ENCODE measurements at regions of chr7 and their contacts with region 1.

Region 1: GRCh38 chr7:22173685-22174573 is 183.0 kb downstream of the RAPGEF5 start:
- DNase-seq: peak; percentile 49
- H3K4me3 Mint-ChIP-seq: peak overlapping the region; percentile 53
- H3K27ac Mint-ChIP-seq: peak overlapping the region; percentile 73
- H3K4me1 Mint-ChIP-seq: peaks cover 19% of the 10 kb centered on the region
- H3K27me3 Mint-ChIP-seq: peaks cover 3% of the 10 kb centered on the region

Region 2: GRCh38 chr7:21945454-21946227 is 228.3 kb before region 1 on chr7 and contains the start of gene CDCA7L:
- intact Hi-C with region 1: loop called (anchors 10 kb)
- DNase-seq: peak; percentile 67
- H3K4me3 Mint-ChIP-seq: peak within 1 kb of the TSS; percentile 91
- H3K27ac Mint-ChIP-seq: peak within 1 kb of the TSS; percentile 85
- H3K4me1 Mint-ChIP-seq: peaks cover 62% of the 10 kb centered on the region
- H3K27me3 Mint-ChIP-seq: peaks cover 6% of the 10 kb centered on the region
- total RNA-seq, gene CDCA7L: 81.5 and 82.9 TPM in 2 replicates

Region 3: GRCh38 chr7:22445140-22445743 is 271.3 kb after region 1 on chr7:
- intact Hi-C with region 1: loop called (anchors 5 kb)
- DNase-seq: no peak
- H3K4me3 Mint-ChIP-seq: no peak overlapping the region
- H3K27ac Mint-ChIP-seq: no peak overlapping the region
- H3K4me1 Mint-ChIP-seq: peaks cover 21% of the 10 kb centered on the region
- H3K27me3 Mint-ChIP-seq: peaks cover 22% of the 10 kb centered on the region

Measured in activated T-helper 2 cell treated with anti-CD3 and anti-CD28 coated beads, Interferon-gamma antibody, Interleukin-2, Interleukin-4, amounts not matched to agents 10 μg/mL and 5 μg/mL and 100 μg/mL, durations not matched to agents 14 hours and 24 hours and 36 hours (primary cell).